Panc1 (cell line): ENCODE measurements at regions of chr12 and their contacts with region 1.

Region 1: DNA sequence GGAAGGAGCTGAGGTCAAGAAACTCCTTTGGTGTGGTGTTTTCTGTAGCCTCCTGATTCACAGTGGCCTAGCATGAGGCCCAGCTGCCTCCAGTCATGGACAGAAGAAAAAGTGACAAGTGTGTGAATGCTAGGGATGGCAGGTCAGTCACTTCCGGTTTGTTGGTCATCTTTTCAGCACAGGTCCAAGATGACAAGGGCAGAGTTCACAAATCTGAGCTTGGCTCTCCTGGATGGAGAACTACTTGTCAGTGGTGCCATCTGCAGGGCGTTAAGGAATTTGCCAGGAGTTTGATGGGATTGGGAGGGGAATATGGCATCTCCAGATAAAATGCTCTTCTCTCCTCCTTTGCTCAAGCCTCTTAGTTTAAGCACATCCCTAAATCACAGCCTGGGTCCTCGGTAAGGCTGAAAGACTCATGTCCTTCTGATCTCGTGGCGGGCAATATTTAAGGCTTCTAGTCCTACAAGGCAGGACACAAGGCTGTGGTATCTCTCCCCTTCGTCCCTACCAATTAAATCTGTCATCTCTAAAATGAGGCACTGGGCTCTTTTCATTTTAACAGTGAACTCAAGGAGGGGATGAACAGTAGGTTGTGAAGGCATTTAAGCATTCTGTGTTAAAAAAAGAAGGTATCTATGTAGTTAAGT is 10.0 kb downstream of the TUBA1B start:
- DNase-seq: peak; percentile 72
- ATAC-seq: peak; percentile 94
- H3K4me3 ChIP-seq: no peak overlapping the region
- H3K27ac ChIP-seq: no peak overlapping the region
- H3K4me1 ChIP-seq: no peaks in the 10 kb centered on the region
- H3K27me3 ChIP-seq: no peaks in the 10 kb centered on the region
- CTCF ChIP-seq: peak; percentile 85

Region 2: GRCh38 chr12:49088190-49088931 is 32.8 kb before region 1 on chr12:
- CTCF ChIA-PET with region 1: interaction called, 47 read pairs
- POLR2A ChIA-PET with region 1: no interaction called
- in situ Hi-C with region 1: no loop called
- intact Hi-C with region 1: no loop called
- DNase-seq: peak; percentile 55
- ATAC-seq: peak; percentile 85
- H3K4me3 ChIP-seq: peak overlapping the region; percentile 13 to 37
- H3K27ac ChIP-seq: 0 out of 2 replicates have a peak overlapping the region, but pooled peaks have one; percentile 57
- H3K4me1 ChIP-seq: peaks cover 31% of the 10 kb centered on the region
- H3K27me3 ChIP-seq: no peaks in the 10 kb centered on the region
- CTCF ChIP-seq: peak; percentile 94

Region 3: DNA sequence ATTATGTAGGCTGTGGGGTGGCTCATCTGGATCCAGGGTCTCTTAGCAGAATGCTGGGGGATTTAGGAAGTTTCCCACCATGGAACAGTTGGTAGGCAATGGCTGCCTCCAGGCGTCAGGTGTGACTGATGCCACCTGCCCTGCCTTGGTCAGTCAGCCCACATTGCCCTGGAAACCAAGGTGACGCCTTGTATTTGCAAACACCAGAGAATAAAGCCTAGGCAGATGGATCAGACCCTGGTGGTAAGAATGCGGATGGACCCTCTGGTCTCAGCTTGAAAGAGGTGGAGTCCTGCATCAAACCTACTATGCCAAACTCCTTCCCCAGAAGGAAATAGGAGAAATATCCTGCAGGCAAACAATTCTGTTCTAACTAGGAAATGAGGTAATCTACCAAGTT is 668.8 kb after region 1 on chr12:
- CTCF ChIA-PET with region 1: no interaction called
- POLR2A ChIA-PET with region 1: no interaction called
- in situ Hi-C with region 1: no loop called
- intact Hi-C with region 1: no loop called
- DNase-seq: no peak
- ATAC-seq: no peak
- H3K4me3 ChIP-seq: no peak overlapping the region
- H3K27ac ChIP-seq: no peak overlapping the region
- H3K4me1 ChIP-seq: no peaks in the 10 kb centered on the region
- H3K27me3 ChIP-seq: no peaks in the 10 kb centered on the region
- CTCF ChIP-seq: no peak

Region 4: DNA sequence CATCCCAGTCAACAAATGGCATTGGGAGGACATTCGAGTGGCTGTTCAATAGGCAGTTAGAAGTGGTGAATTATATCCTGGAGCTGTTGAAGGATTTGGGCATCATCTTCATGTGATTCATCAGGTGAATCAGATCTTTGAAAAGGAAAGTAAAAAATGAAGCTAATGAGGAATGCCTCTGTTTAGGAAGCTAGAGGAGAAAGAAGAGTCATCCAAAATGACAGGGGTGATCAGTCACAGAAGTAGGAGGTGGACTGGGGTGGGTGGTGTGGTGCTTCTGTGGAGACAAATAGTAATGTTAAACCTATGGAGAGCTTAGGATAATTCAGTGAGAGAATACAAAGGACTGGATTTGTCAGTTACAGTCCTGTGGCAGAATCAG is 1416.4 kb after region 1 on chr12:
- CTCF ChIA-PET with region 1: interaction called, 15 read pairs
- POLR2A ChIA-PET with region 1: no interaction called
- in situ Hi-C with region 1: no loop called
- intact Hi-C with region 1: no loop called
- DNase-seq: peak; percentile 80
- ATAC-seq: peak; percentile 42; the same call in 1 of the 2 replicates
- H3K4me3 ChIP-seq: peak overlapping the region in 1 of 2 experiments; percentile 35; a peak in 2 of 4 replicates
- H3K27ac ChIP-seq: peak overlapping the region; percentile 60
- H3K4me1 ChIP-seq: peaks cover 24% of the 10 kb centered on the region
- H3K27me3 ChIP-seq: no peaks in the 10 kb centered on the region
- CTCF ChIP-seq: no peak